ENCODE measurements at regions of chr3 and their contacts with region 1.

Region 1: GRCh38 chr3:126475413-126476114 is at the start of gene ZXDC:
- DNase-seq: peak; percentile 97
- H3K4me3 Mint-ChIP-seq: peak within 1 kb of the TSS; percentile 95
- H3K27ac Mint-ChIP-seq: peak within 1 kb of the TSS; percentile 93
- H3K4me1 Mint-ChIP-seq: peaks cover 29% of the 10 kb centered on the region
- H3K27me3 Mint-ChIP-seq: peaks cover 3% of the 10 kb centered on the region
- total RNA-seq, gene ZXDC: 29.2 and 29.4 TPM in 2 replicates

Region 2: DNA sequence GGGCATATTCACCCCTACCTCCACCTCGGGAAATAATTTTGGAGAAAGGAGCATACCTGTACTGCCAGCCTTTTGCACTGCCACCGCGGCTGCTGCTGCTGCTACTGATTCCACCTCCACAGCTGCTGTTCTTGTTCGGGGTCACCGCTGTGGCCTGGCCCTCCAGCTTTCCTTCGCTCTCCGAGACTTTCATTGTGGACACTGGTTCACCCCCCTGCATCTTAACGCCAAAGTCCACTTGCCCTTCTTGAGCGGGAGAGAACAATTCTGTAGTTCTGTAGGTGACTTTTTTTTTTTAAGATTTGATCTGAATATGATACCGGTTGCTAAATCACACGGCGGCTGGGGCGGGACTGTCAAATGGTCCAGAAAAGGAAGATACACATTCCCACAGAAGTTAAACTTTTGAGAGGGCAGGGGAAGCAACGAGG is 881.0 kb before region 1 on chr3:
- intact Hi-C with region 1: loop called (anchors 10 kb)
- DNase-seq: no peak
- H3K4me3 Mint-ChIP-seq: peak overlapping the region; percentile 90
- H3K27ac Mint-ChIP-seq: peak overlapping the region; percentile 85
- H3K4me1 Mint-ChIP-seq: peaks cover 21% of the 10 kb centered on the region
- H3K27me3 Mint-ChIP-seq: no peaks in the 10 kb centered on the region

Region 3: DNA sequence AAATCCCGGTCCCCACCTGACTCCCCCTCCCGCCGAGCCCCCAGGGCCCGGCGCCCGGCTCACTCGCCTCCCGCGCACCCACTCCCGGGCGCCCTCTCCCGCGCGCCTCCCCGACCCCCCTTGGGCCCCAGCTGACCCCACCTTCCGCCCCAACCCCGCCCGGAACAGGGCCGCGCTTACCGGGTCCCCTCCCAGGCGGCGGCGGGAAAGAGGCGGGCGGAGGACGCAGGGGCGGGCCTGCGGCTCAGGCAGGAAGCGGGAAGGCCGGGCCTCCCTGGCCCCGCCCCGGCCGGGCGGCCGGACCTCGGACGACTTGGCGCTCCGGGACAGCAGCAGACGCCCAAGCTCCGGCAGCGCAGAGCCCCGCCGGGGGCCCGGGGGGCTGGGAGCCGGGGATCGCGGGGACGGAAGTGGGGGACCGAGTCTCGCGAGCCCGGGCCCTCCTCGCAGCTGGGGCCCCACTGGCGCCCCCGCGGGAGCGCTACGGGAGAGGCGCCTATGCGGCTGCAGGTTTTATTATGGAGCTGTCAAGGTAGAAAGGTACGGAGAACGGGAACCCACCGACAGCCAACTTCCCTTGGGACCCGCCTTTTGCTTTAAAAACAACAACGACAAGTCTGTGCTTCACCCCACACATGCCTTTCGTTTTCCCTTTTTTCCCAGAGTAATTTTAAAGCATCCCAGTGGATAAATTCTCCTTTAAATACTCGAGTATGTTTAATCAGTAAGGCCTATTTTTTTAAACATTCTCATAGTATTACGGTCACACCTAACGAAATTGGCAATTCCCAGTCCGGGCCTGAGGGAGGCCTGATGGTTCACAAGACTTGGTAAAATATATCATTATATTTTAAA is 391.4 kb before region 1 on chr3 and contains the start of gene SLC41A3:
- intact Hi-C with region 1: loop called (anchors 5 kb)
- DNase-seq: peak; percentile 97
- H3K4me3 Mint-ChIP-seq: peak within 1 kb of the TSS; percentile 85
- H3K27ac Mint-ChIP-seq: peak within 1 kb of the TSS; percentile 87
- H3K4me1 Mint-ChIP-seq: peaks cover 15% of the 10 kb centered on the region
- H3K27me3 Mint-ChIP-seq: no peaks in the 10 kb centered on the region
- total RNA-seq, gene SLC41A3: 17.9 and 20.1 TPM in 2 replicates

Region 4: GRCh38 chr3:126703512-126704462 is 228.2 kb after region 1 on chr3 and contains the start of gene CHCHD6:
- intact Hi-C with region 1: no loop called
- DNase-seq: peak; percentile 99
- H3K4me3 Mint-ChIP-seq: peak within 1 kb of the TSS; percentile 98
- H3K27ac Mint-ChIP-seq: peak within 1 kb of the TSS; percentile 92
- H3K4me1 Mint-ChIP-seq: peaks cover 15% of the 10 kb centered on the region
- H3K27me3 Mint-ChIP-seq: peaks cover 36% of the 10 kb centered on the region
- total RNA-seq, gene CHCHD6: 17.1 and 18.5 TPM in 2 replicates

Region 5: DNA sequence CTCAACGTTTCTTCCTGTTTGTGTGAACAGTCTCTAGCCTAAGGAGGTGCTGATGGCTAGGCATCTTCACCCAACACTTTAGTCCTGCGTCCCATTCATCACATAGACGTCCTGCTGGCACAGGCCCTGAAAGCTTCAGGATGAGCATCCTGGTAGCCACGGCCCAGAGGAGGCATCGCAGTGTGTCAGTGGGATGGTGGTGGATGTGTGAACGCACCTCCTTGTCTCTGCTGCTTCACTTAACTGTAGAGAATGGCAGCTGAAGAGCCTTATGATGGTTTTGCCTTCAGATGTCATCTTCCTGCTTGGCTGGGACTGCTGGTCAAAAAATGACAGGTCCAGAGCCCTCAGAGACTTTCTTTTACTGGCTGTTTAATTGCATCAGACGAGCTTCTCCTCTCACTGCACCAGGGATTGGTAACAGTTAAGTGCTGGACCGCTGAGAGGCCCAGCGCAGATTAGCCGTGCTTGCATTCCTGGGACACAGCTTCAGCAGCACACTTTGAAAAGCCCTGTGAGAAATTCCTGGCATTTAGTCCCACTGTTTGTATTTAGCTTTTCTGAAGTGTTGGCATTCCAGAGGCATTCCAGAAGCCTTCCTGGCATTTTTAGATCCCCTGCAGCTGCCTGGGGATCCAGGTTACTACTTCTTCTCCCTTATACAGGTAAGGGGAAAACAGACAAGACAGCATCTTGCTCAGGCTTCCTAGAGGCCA is 375.0 kb after region 1 on chr3:
- intact Hi-C with region 1: no loop called
- DNase-seq: no peak
- H3K4me3 Mint-ChIP-seq: no peak overlapping the region
- H3K27ac Mint-ChIP-seq: no peak overlapping the region
- H3K4me1 Mint-ChIP-seq: no peaks in the 10 kb centered on the region
- H3K27me3 Mint-ChIP-seq: no peaks in the 10 kb centered on the region

Region 6: DNA sequence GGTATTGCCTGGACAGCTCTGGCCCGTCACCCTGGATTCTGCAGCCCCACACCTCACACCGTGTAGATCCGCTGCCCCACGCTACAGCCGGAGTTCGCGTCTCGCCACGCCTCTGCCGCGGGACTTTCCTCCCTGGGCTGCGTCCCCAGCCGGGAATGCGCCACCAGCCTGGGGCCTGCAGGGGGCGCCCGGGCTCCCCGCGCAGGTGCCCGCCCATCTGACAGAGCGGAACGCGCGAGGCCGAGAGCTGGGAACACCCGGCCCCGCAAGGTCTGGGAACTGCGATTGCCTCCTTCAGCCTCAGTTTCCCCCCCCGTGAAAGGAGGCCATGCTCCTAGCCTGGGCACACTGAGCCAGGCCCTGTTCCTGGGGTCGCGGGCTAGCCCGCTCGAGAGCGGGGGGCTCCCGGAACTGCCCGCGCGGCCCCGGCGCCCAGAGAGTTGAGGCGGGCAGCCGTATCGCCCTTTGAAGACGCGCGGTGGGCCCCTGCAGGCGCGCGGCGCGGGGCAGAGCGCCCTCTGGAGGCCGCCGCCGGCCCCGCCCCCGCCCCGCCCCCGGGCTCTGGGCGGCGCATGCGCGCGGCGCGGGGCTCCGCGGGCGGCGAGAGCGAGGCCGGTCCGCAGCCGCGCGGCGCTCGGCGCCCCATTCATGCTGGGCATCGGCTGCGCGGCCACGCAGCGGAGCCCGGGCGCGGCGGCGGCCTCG is 507.1 kb after region 1 on chr3 and contains the start of gene PLXNA1:
- intact Hi-C with region 1: loop called (anchors 5 kb)
- DNase-seq: peak; percentile 97
- H3K4me3 Mint-ChIP-seq: peak within 1 kb of the TSS; percentile 89
- H3K27ac Mint-ChIP-seq: peak within 1 kb of the TSS; percentile 92
- H3K4me1 Mint-ChIP-seq: peaks cover 22% of the 10 kb centered on the region
- H3K27me3 Mint-ChIP-seq: peaks cover 9% of the 10 kb centered on the region
- total RNA-seq, gene PLXNA1: 21.3 and 24.0 TPM in 2 replicates

Region 7: GRCh38 chr3:127002195-127003174 is 526.9 kb after region 1 on chr3:
- intact Hi-C with region 1: no loop called
- DNase-seq: no peak
- H3K4me3 Mint-ChIP-seq: no peak overlapping the region
- H3K27ac Mint-ChIP-seq: no peak overlapping the region
- H3K4me1 Mint-ChIP-seq: no peaks in the 10 kb centered on the region
- H3K27me3 Mint-ChIP-seq: no peaks in the 10 kb centered on the region

Region 8: GRCh38 chr3:128051837-128052594 is 1576.5 kb after region 1 on chr3 and contains the start of gene SEC61A1:
- intact Hi-C with region 1: loop called (anchors 10 kb)
- DNase-seq: peak; percentile 99
- H3K4me3 Mint-ChIP-seq: peak within 1 kb of the TSS; percentile 95
- H3K27ac Mint-ChIP-seq: peak within 1 kb of the TSS; percentile 96
- H3K4me1 Mint-ChIP-seq: peaks cover 33% of the 10 kb centered on the region
- H3K27me3 Mint-ChIP-seq: peaks cover 9% of the 10 kb centered on the region
- total RNA-seq, gene SEC61A1: 194 TPM in 2 replicates

Measured in activated CD4-positive, alpha-beta T cell treated with anti-CD3 and anti-CD28 coated beads, Interleukin-2, amount 10 ng/mL, durations not matched to agents 24 days and 14 days (primary cell).